Mucosa of descending colon (tissue), 3 donors: ENCODE measurements at regions of chr4 and their contacts with region 1.

Region 1: DNA sequence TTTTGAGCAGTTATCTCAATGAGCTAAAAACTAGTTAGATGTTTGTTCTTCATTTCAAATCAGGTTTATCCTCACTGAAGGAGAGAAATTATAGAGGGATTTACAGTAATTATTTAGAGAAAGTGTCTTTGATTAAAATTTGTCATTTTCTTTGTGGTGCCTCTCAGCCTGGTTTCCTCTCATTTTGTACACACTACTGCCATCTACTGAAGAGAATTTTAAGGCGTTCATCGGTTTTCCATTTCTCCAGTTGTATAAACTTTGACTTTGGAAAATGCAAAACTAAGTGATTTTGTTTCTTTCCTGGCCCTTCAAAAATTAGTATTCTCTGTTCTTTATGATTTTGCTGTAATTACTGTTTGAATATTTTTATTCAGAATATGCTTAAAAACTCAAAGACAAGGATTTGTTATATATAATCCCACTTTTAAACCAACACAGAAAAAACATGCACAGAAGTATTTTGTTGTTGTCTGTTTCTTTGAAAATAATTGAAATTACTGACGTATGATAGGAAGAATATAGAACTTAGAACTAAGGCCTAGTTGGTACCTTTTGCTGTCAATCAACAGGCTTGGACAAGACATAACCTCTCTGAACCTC is 34.4 kb upstream of the ANXA3 start:
- DNase-seq: peak in 1 of 3 donors; percentile 16
- ATAC-seq: no peak
- H3K4me3 ChIP-seq: no peak overlapping the region
- H3K4me1 ChIP-seq: peaks cover 11% of the 10 kb centered on the region
- CTCF ChIP-seq: peak; percentile 29

Region 2: DNA sequence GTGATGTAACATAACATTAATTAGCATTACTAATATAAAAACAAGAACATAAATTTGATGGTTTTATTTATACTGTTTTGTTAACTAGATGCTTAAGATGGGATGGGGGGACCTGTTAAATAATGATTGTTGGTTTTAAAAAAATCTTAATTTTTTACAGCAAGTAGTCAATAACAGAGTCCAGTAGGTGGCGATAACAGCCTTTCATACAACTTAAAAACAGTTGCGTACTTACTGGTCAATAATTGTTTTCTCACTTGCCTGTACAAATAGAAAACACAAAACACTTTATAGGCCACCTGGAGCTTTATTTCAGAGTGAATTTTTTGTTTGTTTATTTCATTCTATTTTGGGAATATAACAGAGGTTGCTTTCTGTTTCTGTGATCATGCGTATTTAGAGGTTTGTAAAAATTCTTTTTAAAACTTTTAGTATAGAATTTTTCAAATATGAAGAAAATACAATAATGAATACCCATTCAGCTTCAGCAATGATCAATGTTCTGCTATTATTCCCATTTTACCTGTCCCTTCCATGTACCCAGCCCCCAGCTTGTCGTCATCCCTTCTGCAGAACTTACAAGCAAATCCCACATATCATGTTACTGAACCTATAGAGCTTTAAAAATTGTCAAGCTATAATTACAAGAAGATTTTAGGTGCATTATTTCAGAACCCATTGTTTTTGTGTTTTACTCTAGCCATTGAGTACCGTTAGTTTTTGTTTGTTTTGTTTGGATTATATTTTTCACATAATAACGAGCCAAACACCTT is 557.4 kb before region 1 on chr4:
- intact Hi-C with region 1: loop called in 1 of 2 experiments (anchors 5 kb)
- DNase-seq: peak in 1 of 3 donors; percentile 57
- ATAC-seq: no peak
- H3K4me3 ChIP-seq: no peak overlapping the region
- H3K4me1 ChIP-seq: no peaks in the 10 kb centered on the region
- CTCF ChIP-seq: peak; percentile 18

Region 3: GRCh38 chr4:78056265-78057129 is 460.7 kb before region 1 on chr4:
- intact Hi-C with region 1: loop called in 1 of 2 experiments (anchors 5 kb)
- DNase-seq: peak; percentile 53 to 80 (median 56)
- ATAC-seq: peak; percentile 54
- H3K4me3 ChIP-seq: no peak overlapping the region
- H3K4me1 ChIP-seq: peaks cover 22% of the 10 kb centered on the region
- CTCF ChIP-seq: no peak